ENCODE measurements at regions of chr17 and their contacts with region 1.

Region 1: DNA sequence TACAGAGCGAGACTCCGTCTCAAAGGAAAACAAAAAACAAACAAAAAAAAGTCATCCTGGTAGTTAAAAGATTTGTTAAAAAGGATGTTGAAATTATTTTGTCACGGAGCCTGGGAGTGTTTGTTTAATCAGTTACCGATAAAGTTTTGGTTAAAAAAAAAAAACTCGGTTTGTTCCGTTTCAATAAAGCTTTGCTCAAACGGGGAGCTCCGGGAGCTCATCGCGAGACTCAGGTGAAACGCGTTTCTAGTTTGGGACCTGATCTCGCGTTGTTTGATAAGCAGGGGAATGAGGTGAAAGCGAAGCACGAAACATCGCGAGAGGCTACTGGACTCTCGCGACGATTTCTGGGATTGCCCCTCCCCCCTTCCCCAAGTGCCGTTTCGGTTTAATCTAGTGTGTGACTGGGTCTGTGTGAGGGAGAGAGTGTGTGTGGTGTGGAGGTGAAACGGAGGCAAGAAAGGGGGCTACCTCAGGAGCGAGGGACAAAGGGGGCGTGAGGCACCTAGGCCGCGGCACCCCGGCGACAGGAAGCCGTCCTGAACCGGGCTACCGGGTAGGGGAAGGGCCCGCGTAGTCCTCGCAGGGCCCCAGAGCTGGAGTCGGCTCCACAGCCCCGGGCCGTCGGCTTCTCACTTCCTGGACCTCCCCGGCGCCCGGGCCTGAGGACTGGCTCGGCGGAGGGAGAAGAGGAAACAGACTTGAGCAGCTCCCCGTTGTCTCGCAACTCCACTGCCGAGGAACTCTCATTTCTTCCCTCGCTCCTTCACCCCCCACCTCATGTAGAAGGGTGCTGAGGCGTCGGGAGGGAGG is at the start of gene CDK12:
- DNase-seq: peak; percentile 90 to 99 (median 94)
- ATAC-seq: peak; percentile 86
- H3K4me3 ChIP-seq: peak within 1 kb of the TSS; percentile 75 to 84
- H3K4me3 Mint-ChIP-seq: peak within 1 kb of the TSS; percentile 95
- H3K27ac ChIP-seq: peak within 1 kb of the TSS; percentile 81 to 91
- H3K27ac Mint-ChIP-seq: peak within 1 kb of the TSS; percentile 96
- H3K4me1 ChIP-seq: peaks cover 21% of the 10 kb centered on the region
- H3K4me1 Mint-ChIP-seq: peaks cover 42% of the 10 kb centered on the region
- H3K27me3 ChIP-seq: no peaks in the 10 kb centered on the region
- H3K27me3 Mint-ChIP-seq: no peaks in the 10 kb centered on the region
- CTCF ChIP-seq: no peak
- total RNA-seq, gene CDK12: 95.5 to 101 TPM

Region 2: GRCh38 chr17:38982858-38983746 is 478.2 kb before region 1 on chr17:
- CTCF ChIA-PET with region 1: no interaction called
- POLR2A ChIA-PET with region 1: no interaction called
- intact Hi-C with region 1: no loop called
- DNase-seq: peak in 8 of 9 experiments; percentile 16 to 82 (median 55)
- ATAC-seq: peak; percentile 84
- H3K4me3 ChIP-seq: no peak overlapping the region
- H3K4me3 Mint-ChIP-seq: no peak overlapping the region
- H3K27ac ChIP-seq: no peak overlapping the region
- H3K27ac Mint-ChIP-seq: no peak overlapping the region
- H3K4me1 ChIP-seq: no peaks in the 10 kb centered on the region
- H3K4me1 Mint-ChIP-seq: peaks cover 2% of the 10 kb centered on the region
- H3K27me3 ChIP-seq: no peaks in the 10 kb centered on the region
- H3K27me3 Mint-ChIP-seq: no peaks in the 10 kb centered on the region
- CTCF ChIP-seq: peak; percentile 72

Region 3: DNA sequence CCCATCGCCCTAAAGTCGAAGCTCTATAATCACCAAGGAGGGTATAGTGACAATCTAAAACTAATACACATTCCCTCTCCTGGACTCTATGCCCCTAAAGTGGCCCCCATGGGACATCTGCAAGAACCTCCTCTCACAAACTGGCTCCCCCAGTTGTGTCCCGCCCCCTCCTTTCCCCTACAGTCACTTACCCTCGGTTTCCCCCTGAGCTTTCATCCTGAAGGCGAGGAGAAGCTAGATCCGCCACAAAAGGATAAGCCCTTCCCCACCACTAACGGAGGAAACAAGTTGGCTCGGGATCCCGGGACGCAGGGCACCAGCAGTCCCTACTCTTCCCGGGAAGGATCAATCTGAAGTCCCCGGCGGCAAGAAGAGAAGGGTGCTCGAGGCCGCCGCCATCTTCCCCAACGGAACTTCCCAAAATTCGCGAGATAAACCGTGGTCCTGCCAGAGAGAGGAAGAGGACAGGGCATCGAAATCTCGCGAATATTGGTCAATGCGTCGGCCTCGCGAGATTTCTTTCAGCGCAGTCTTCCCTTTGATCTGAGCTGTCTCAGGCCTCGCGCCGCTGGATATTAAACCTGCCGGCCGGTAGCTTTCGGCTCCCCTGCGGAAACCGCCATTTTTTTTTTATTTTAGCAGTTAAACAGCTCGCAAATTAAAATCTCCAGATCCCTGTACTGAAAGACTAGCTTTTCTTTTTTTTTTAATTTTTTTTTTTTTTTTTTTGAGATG is 10.3 kb before region 1 on chr17 and contains the start of gene MED1:
- CTCF ChIA-PET with region 1: interaction called, 4 read pairs
- POLR2A ChIA-PET with region 1: interaction called, 82 read pairs
- intact Hi-C with region 1: loop called (anchors 1 kb)
- DNase-seq: peak; percentile 80 to 98 (median 89)
- ATAC-seq: peak; percentile 91
- H3K4me3 ChIP-seq: peak within 1 kb of the TSS; percentile 71 to 98
- H3K4me3 Mint-ChIP-seq: peak within 1 kb of the TSS; percentile 98
- H3K27ac ChIP-seq: peak within 1 kb of the TSS; percentile 86 to 87
- H3K27ac Mint-ChIP-seq: peak within 1 kb of the TSS; percentile 98
- H3K4me1 ChIP-seq: peaks cover 17% of the 10 kb centered on the region
- H3K4me1 Mint-ChIP-seq: peaks cover 27% of the 10 kb centered on the region
- H3K27me3 ChIP-seq: no peaks in the 10 kb centered on the region
- H3K27me3 Mint-ChIP-seq: no peaks in the 10 kb centered on the region
- CTCF ChIP-seq: no peak
- total RNA-seq, gene MED1: 35.1 to 37.3 TPM